ENCODE measurements at regions of chr20 and their contacts with region 1.

Region 1: GRCh38 chr20:57329608-57330221 is at the start of gene SPO11:
- DNase-seq: peak; percentile 67 to 79
- H3K4me3 ChIP-seq: no peak within 1 kb of the TSS
- H3K4me3 Mint-ChIP-seq: peak within 1 kb of the TSS; percentile 42
- H3K27ac Mint-ChIP-seq: peak within 1 kb of the TSS; percentile 68
- H3K4me1 ChIP-seq: peaks cover 52% of the 10 kb centered on the region
- H3K4me1 Mint-ChIP-seq: peaks cover 38% of the 10 kb centered on the region
- H3K27me3 ChIP-seq: no peaks in the 10 kb centered on the region
- H3K27me3 Mint-ChIP-seq: no peaks in the 10 kb centered on the region
- CTCF ChIP-seq: peak; percentile 41 to 80
- total RNA-seq, gene SPO11: not detected in 2 replicates

Region 2: GRCh38 chr20:57217177-57217951 is 112.4 kb before region 1 on chr20:
- CTCF ChIA-PET with region 1: interaction called, 39 read pairs
- POLR2A ChIA-PET with region 1: no interaction called
- intact Hi-C with region 1: no loop called
- DNase-seq: no peak
- H3K4me3 ChIP-seq: no peak overlapping the region
- H3K4me3 Mint-ChIP-seq: no peak overlapping the region
- H3K27ac Mint-ChIP-seq: no peak overlapping the region
- H3K4me1 ChIP-seq: peaks cover 9% of the 10 kb centered on the region; the same call in 1 of the 2 replicates
- H3K4me1 Mint-ChIP-seq: no peaks in the 10 kb centered on the region
- H3K27me3 ChIP-seq: no peaks in the 10 kb centered on the region
- H3K27me3 Mint-ChIP-seq: no peaks in the 10 kb centered on the region
- CTCF ChIP-seq: no peak

Region 3: DNA sequence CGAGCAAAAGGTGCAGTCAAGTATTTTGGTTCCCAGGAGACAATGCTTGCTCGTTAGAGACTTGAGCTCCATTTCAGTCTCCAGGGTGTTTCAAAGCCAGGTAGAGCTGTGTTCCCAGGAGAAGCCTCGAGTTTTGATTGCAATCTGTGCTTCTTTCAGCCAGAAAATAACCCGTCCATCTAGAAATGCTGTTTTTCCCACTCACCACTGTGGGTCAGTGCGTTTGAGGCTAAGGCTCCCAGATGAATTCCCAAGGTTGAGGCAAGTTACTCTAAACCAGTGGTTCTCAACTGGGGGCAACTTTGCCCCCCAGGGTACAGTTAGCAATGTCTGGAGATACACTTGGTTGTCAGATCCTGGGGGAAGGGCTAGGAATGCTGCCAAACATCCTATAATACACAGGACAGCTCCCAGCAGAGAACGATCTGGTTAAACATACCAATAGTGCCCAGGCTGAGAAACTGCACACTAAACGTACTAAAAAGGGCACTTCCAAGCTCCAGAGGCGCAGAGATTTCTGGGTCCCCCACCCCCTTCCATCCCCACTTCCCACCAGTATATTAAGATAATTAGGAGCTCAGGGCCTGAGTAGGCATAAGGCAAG is 77.1 kb before region 1 on chr20:
- CTCF ChIA-PET with region 1: interaction called, 28 read pairs
- POLR2A ChIA-PET with region 1: interaction called, 6 read pairs
- intact Hi-C with region 1: loop called (anchors 1 kb)
- DNase-seq: no peak
- H3K4me3 ChIP-seq: no peak overlapping the region
- H3K4me3 Mint-ChIP-seq: no peak overlapping the region
- H3K27ac Mint-ChIP-seq: peak overlapping the region; percentile 55
- H3K4me1 ChIP-seq: peaks cover 17% of the 10 kb centered on the region
- H3K4me1 Mint-ChIP-seq: peaks cover 55% of the 10 kb centered on the region
- H3K27me3 ChIP-seq: no peaks in the 10 kb centered on the region
- H3K27me3 Mint-ChIP-seq: no peaks in the 10 kb centered on the region
- CTCF ChIP-seq: no peak

Region 4: DNA sequence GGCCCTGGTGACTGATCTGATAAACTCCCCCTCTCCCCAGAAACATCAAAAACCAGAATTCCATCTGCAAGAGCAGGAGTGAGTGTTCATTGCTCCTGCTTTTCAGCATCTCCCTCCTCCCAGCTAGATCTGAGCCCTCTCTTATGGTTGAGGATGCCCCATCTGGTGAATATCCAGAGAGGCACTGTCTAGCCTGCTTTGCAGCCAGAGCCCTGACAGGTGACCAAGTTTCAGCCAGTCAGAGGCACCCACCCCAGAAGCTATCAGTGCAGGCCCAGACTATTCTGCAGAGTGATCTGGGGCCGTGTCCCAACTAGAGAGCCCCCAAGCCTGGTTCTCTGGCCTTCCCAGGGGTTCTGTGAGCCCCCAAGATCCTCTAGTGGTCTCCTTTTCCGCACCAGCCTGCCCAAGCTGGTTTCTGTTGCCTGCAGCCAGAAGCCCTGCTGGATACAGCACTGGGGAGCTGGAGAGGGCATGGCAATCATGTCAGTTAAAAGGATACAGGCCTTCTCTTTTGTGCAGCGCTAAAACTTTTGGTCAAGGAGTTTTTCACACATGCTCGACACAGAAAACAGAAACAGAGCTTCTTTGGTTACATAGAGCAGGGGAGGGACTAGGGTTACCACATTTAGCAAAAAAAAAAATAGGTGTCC is 56.7 kb before region 1 on chr20:
- CTCF ChIA-PET with region 1: interaction called, 35 read pairs
- POLR2A ChIA-PET with region 1: no interaction called
- intact Hi-C with region 1: no loop called
- DNase-seq: peak in 1 of 2 experiments; percentile 66
- H3K4me3 ChIP-seq: no peak overlapping the region
- H3K4me3 Mint-ChIP-seq: no peak overlapping the region
- H3K27ac Mint-ChIP-seq: no peak overlapping the region
- H3K4me1 ChIP-seq: peaks cover 36% of the 10 kb centered on the region
- H3K4me1 Mint-ChIP-seq: peaks cover 74% of the 10 kb centered on the region
- H3K27me3 ChIP-seq: no peaks in the 10 kb centered on the region
- H3K27me3 Mint-ChIP-seq: no peaks in the 10 kb centered on the region
- CTCF ChIP-seq: peak in 1 of 2 experiments; percentile 5

Region 5: GRCh38 chr20:57308813-57309271 is 20.9 kb before region 1 on chr20:
- CTCF ChIA-PET with region 1: interaction called, 30 read pairs
- POLR2A ChIA-PET with region 1: interaction called, 42 read pairs
- intact Hi-C with region 1: loop called (anchors 1 kb)
- DNase-seq: peak; percentile 67 to 77
- H3K4me3 ChIP-seq: no peak overlapping the region
- H3K4me3 Mint-ChIP-seq: no peak overlapping the region
- H3K27ac Mint-ChIP-seq: peak overlapping the region; percentile 76
- H3K4me1 ChIP-seq: peaks cover 66% of the 10 kb centered on the region
- H3K4me1 Mint-ChIP-seq: peaks cover 38% of the 10 kb centered on the region
- H3K27me3 ChIP-seq: no peaks in the 10 kb centered on the region
- H3K27me3 Mint-ChIP-seq: no peaks in the 10 kb centered on the region
- CTCF ChIP-seq: no peak